Endothelial cell of umbilical vein (primary cell): ENCODE measurements at regions of chr11 and their contacts with region 1.

Region 1: DNA sequence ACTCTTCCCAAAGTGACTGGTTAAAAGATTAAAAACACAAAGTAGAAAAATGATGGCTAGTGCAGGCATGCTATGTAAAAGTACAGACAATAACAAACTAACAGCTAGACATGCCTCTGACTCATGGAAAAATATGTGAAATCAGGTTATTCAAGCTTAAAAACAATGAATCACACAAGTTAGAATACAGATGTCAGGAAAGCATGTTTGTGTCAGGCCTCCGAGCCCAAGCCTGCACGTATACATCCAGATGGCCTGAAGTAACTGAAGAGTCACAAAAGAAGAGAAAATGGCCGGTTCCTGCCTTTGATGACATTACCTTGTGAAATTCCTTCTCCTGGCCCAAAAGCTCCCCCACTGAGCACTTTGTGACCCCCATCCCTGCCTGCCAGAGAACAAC is 110.1 kb downstream of the NOX4 start:
- DNase-seq: peak; percentile 97
- H3K4me3 ChIP-seq: peak overlapping the region in 1 of 3 experiments; percentile 29
- H3K27ac ChIP-seq: peak overlapping the region; percentile 98
- H3K4me1 ChIP-seq: peaks cover 34% of the 10 kb centered on the region
- H3K27me3 ChIP-seq: no peaks in the 10 kb centered on the region
- CTCF ChIP-seq: no peak
- POLR2A ChIP-seq: no peak

Region 2: DNA sequence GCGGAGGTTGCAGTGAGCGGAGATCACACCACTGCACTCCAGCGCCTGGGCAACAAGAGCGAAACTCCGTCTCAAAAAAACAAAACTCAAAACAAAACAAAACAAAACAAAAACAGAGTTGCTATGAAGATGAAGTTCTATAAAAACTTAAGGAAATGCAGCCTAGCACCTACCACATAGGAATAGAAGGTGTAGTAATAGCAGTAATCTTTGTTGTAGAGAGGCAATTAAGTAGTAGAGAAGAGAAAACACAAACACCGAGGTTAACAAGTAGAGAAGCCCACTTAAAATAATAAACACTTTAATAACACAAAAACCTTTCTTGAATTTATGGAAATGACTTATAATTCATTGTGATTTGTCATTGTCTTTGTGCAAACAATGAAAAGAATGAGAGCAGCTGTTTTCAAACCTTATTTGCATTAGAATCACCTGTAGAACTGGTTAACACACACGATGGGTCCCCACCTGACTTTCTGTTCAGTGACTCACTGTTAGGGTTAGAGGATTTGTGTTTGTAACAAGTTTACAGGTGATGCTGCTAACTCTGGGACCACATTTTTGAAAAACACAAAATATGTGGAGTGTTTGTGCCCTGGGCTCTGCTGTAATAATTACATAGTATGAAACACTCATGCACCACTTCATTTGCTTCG is 160.3 kb before region 1 on chr11:
- CTCF ChIA-PET with region 1: no interaction called
- POLR2A ChIA-PET with region 1: no interaction called
- dilution Hi-C with region 1: no loop called
- intact Hi-C with region 1: no loop called
- DNase-seq: no peak
- H3K4me3 ChIP-seq: no peak overlapping the region
- H3K27ac ChIP-seq: no peak overlapping the region
- H3K4me1 ChIP-seq: no peaks in the 10 kb centered on the region
- H3K27me3 ChIP-seq: no peaks in the 10 kb centered on the region
- CTCF ChIP-seq: no peak
- POLR2A ChIP-seq: no peak

Region 3: GRCh38 chr11:89327885-89328284 is 53.2 kb before region 1 on chr11:
- CTCF ChIA-PET with region 1: interaction called, 11 read pairs
- POLR2A ChIA-PET with region 1: no interaction called
- dilution Hi-C with region 1: no loop called
- intact Hi-C with region 1: loop called (anchors 1 kb)
- DNase-seq: no peak
- H3K4me3 ChIP-seq: no peak overlapping the region
- H3K27ac ChIP-seq: no peak overlapping the region
- H3K4me1 ChIP-seq: no peaks in the 10 kb centered on the region
- H3K27me3 ChIP-seq: no peaks in the 10 kb centered on the region
- CTCF ChIP-seq: no peak
- POLR2A ChIP-seq: no peak

Region 4: GRCh38 chr11:89490981-89491690 is 110.0 kb after region 1 on chr11 and contains the start of gene NOX4:
- CTCF ChIA-PET with region 1: interaction called, 4 read pairs
- POLR2A ChIA-PET with region 1: no interaction called
- dilution Hi-C with region 1: no loop called
- intact Hi-C with region 1: loop called (anchors 1 kb)
- DNase-seq: peak; percentile 89
- H3K4me3 ChIP-seq: peak within 1 kb of the TSS; percentile 54 to 98 (median 96)
- H3K27ac ChIP-seq: peak within 1 kb of the TSS; percentile 98
- H3K4me1 ChIP-seq: peaks cover 34% of the 10 kb centered on the region
- H3K27me3 ChIP-seq: no peaks in the 10 kb centered on the region
- CTCF ChIP-seq: no peak
- POLR2A ChIP-seq: peak; percentile 96
- total RNA-seq, gene NOX4: 34.0 and 47.7 TPM in 2 replicates

Region 5: GRCh38 chr11:89613911-89614310 is 232.8 kb after region 1 on chr11:
- CTCF ChIA-PET with region 1: interaction called, 10 read pairs
- POLR2A ChIA-PET with region 1: no interaction called
- dilution Hi-C with region 1: no loop called
- intact Hi-C with region 1: no loop called
- DNase-seq: peak; percentile 20
- H3K4me3 ChIP-seq: no peak overlapping the region
- H3K27ac ChIP-seq: no peak overlapping the region
- H3K4me1 ChIP-seq: no peaks in the 10 kb centered on the region
- H3K27me3 ChIP-seq: no peaks in the 10 kb centered on the region
- CTCF ChIP-seq: no peak
- POLR2A ChIP-seq: no peak